ENCODE measurements at regions of chr3 and their contacts with region 1.

Region 1: DNA sequence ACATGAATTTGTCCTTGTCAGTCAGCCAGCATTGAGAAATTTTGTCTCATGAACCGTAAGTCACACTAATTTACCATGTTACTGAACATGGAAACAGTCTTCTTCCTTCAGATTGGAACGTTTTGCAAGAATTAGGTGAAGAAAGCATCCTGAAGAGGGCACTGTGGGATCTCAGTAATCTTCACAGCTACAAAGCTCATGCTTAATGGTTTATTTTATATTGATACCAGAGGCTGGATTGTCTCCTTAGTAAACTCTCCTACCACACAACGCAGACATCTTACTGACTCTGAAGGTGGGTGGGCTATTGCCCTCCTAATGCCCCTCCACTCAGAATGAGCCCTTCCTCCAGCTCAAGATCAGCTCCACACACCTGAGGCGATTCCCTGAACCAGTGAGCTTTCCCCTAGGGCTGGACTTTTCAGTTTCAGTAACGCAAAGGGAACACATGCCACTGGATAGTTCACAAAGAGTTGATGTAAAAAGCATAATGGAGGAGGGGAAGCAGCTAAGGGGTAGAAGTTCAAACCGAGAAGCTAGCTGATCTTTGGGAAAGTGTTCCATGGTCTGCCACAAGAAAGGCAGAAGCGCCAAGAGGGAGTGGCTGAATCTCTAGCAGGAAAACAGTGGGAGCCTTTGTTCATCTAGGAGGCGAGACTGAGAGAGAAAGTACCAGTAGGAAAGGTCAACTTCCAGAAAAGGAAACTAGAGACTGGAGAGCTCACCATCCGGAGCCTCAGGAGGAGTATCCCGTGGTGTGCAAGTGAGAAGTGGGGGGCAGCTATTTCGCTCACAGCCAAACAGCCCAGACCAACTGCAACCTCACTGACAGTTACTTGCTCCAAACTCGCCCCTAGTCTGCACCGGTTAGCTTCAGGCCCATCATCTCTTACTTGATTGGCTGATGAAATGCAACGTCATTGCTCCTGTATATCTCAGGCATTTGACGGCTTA is at the start of gene SLC9C1:
- DNase-seq: peak; percentile 72
- H3K4me3 Mint-ChIP-seq: peak within 1 kb of the TSS; percentile 60
- H3K27ac Mint-ChIP-seq: peak within 1 kb of the TSS; percentile 20
- H3K4me1 Mint-ChIP-seq: peaks cover 19% of the 10 kb centered on the region
- H3K27me3 Mint-ChIP-seq: no peaks in the 10 kb centered on the region
- total RNA-seq, gene SLC9C1: not detected

Region 2: GRCh38 chr3:112111785-112112402 is 181.8 kb before region 1 on chr3:
- CTCF ChIA-PET with region 1: interaction called, 46 read pairs
- intact Hi-C with region 1: loop called (anchors 1 kb)
- DNase-seq: peak; percentile 79
- H3K4me3 Mint-ChIP-seq: no peak overlapping the region
- H3K27ac Mint-ChIP-seq: no peak overlapping the region
- H3K4me1 Mint-ChIP-seq: peaks cover 17% of the 10 kb centered on the region
- H3K27me3 Mint-ChIP-seq: peaks cover 3% of the 10 kb centered on the region

Region 3: GRCh38 chr3:112261742-112262141 is 31.9 kb before region 1 on chr3:
- CTCF ChIA-PET with region 1: no interaction called
- intact Hi-C with region 1: no loop called
- DNase-seq: no peak
- H3K4me3 Mint-ChIP-seq: no peak overlapping the region
- H3K27ac Mint-ChIP-seq: no peak overlapping the region
- H3K4me1 Mint-ChIP-seq: no peaks in the 10 kb centered on the region
- H3K27me3 Mint-ChIP-seq: no peaks in the 10 kb centered on the region

Region 4: GRCh38 chr3:112303764-112304325 is 10.2 kb after region 1 on chr3:
- CTCF ChIA-PET with region 1: interaction called, 40 read pairs
- intact Hi-C with region 1: no loop called
- DNase-seq: peak; percentile 52
- H3K4me3 Mint-ChIP-seq: no peak overlapping the region
- H3K27ac Mint-ChIP-seq: no peak overlapping the region
- H3K4me1 Mint-ChIP-seq: no peaks in the 10 kb centered on the region
- H3K27me3 Mint-ChIP-seq: no peaks in the 10 kb centered on the region

Region 5: GRCh38 chr3:112321867-112322649 is 28.4 kb after region 1 on chr3:
- CTCF ChIA-PET with region 1: interaction called, 22 read pairs
- intact Hi-C with region 1: loop called (anchors 1 kb)
- DNase-seq: no peak
- H3K4me3 Mint-ChIP-seq: no peak overlapping the region
- H3K27ac Mint-ChIP-seq: no peak overlapping the region
- H3K4me1 Mint-ChIP-seq: peaks cover 13% of the 10 kb centered on the region
- H3K27me3 Mint-ChIP-seq: peaks cover 9% of the 10 kb centered on the region

Region 6: GRCh38 chr3:112333002-112333380 is 39.3 kb after region 1 on chr3 and contains the start of gene CD200:
- CTCF ChIA-PET with region 1: interaction called, 23 read pairs
- intact Hi-C with region 1: no loop called
- DNase-seq: peak; percentile 75
- H3K4me3 Mint-ChIP-seq: peak within 1 kb of the TSS; percentile 94
- H3K27ac Mint-ChIP-seq: peak within 1 kb of the TSS; percentile 99
- H3K4me1 Mint-ChIP-seq: peaks cover 39% of the 10 kb centered on the region
- H3K27me3 Mint-ChIP-seq: no peaks in the 10 kb centered on the region
- total RNA-seq, gene CD200: 50.0 to 53.6 TPM

Region 7: DNA sequence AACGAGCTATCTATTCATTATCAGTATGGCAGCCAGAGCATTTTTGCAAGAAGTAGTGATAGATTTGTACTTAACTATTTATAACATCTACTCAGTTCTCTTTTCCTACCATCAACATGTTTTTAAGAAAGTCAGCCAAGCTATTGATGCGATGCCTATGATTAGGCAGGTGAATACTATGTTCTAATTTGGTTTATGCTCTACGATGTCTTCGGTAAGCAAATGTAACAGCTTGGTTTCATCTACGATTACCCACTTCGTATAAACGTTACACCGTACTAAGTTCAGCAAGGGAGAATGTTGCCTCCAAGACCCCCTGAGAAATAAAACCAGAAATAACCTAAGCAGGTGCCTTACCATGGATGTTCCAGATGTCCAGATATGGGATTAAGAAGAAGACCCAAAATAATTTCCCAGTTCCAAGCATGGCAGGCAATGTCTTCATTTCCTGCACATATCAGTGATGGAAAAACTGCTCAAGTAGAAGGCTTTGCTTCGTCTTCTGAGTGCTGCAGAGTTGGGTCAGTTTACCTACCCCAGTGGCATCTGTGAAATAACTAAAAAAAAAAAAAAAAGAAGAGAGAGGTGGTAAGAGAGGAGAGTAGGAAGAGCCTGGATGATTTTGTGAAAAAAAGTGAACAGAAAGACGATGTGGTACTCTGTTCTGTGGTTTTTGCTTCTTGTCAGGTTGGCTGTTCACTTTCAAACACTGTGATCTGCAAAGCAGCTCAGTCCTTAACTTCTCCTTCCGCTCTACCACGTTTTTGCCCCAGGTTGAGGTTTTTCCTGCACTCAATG is 205.5 kb after region 1 on chr3 and contains the start of gene BTLA:
- CTCF ChIA-PET with region 1: interaction called, 10 read pairs
- intact Hi-C with region 1: no loop called
- DNase-seq: peak; percentile 71
- H3K4me3 Mint-ChIP-seq: peak within 1 kb of the TSS; percentile 100
- H3K27ac Mint-ChIP-seq: peak within 1 kb of the TSS; percentile 100
- H3K4me1 Mint-ChIP-seq: peaks cover 51% of the 10 kb centered on the region
- H3K27me3 Mint-ChIP-seq: no peaks in the 10 kb centered on the region
- total RNA-seq, gene BTLA: 70.6 to 73.4 TPM

Region 8: GRCh38 chr3:112531358-112531781 is 237.7 kb after region 1 on chr3:
- CTCF ChIA-PET with region 1: interaction called, 24 read pairs
- intact Hi-C with region 1: loop called (anchors 1 kb)
- DNase-seq: no peak
- H3K4me3 Mint-ChIP-seq: no peak overlapping the region
- H3K27ac Mint-ChIP-seq: peak overlapping the region; percentile 62
- H3K4me1 Mint-ChIP-seq: peaks cover 11% of the 10 kb centered on the region
- H3K27me3 Mint-ChIP-seq: no peaks in the 10 kb centered on the region

Measured in activated naive CD4-positive, alpha-beta T cell treated with anti-CD3 and anti-CD28 coated beads for 36 hours (primary cell).